BJ (cell line): ENCODE measurements at regions of chr12 and their contacts with region 1.

Region 1: DNA sequence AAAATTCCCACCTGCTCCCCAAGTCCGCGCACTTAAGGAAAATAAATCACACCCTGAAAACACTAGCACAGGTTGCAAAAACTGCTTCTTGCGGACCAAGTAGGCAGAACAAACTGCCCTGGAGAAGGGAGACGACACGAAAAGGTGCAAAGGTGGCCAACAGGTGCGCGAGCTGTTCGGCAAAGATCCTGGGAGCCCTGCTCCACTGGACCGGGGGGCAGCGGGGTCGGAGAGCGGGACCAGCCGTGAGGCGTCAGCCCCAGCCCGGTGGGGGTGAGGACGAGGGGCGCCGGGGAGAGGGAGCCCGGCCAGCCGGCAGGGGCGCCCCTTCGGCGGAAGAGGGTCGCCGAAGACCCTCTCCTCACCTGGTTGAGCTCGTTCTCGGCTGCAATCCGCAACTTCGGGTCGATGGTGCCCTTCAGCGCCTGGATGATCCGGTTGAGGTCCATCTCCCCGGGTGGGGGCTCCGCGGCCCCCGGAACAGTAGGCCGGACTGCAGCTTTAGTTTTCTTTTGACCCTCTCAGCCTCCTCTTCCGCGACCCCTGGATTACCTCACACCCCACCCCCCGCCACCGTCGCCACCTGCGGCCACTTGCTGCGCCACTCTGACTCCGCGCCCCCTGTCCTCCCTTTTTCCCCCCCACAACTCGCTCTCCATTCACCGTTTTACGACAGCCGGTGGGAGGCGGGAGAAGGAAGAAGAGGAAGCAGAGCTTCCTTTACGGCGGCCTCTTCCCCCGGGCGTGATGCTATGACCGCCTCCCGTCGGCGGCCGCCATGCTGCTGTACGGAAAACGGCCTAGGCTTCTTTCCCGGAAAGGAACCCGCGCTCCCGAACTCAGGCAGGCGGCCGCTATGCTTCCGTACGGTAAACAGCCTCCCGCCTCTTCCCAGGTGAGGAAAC is at the start of gene IPO8:
- DNase-seq: peak; percentile 45
- H3K4me3 ChIP-seq: peak within 1 kb of the TSS; percentile 94
- H3K27me3 ChIP-seq: no peaks in the 10 kb centered on the region
- CTCF ChIP-seq: peak; percentile 51
- polyA plus RNA-seq, gene IPO8: 6.8 and 12.2 TPM in 2 replicates

Region 2: GRCh38 chr12:30191696-30192455 is 503.6 kb before region 1 on chr12:
- CTCF ChIA-PET with region 1: no interaction called
- POLR2A ChIA-PET with region 1: interaction called, 18 read pairs
- DNase-seq: no peak
- H3K4me3 ChIP-seq: no peak overlapping the region
- H3K27me3 ChIP-seq: no peaks in the 10 kb centered on the region
- CTCF ChIP-seq: no peak

Region 3: GRCh38 chr12:30862486-30862885 is 167.0 kb after region 1 on chr12:
- CTCF ChIA-PET with region 1: no interaction called
- POLR2A ChIA-PET with region 1: no interaction called
- DNase-seq: no peak
- H3K4me3 ChIP-seq: no peak overlapping the region
- H3K27me3 ChIP-seq: no peaks in the 10 kb centered on the region; the same call in 1 of the 2 replicates
- CTCF ChIP-seq: no peak